Heart right ventricle (tissue), 16 donors: ENCODE measurements at regions of chr20 and their contacts with region 1.

Region 1: DNA sequence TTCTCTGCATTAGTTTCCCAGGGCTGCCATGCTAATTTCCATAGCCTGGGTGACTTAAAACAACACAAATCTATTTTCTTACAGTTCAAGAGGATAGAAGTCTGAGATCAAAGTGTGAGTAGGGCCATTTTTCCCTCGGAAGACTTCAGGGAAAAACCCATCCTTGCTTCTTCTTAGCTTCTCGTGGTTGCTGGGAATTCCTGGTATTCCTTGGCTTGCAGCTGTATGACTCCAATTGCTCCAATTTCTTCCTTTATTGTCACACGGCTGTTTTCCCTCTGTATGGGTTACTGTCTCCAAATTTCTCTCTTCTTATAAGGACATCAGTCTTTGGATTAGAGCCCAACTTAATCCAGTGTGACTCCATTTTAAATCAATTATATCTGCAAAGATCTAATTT is 128.4 kb upstream of the JAG1 start:
- DNase-seq: no peak
- ATAC-seq: no peak
- H3K4me3 ChIP-seq: no peak overlapping the region
- H3K27ac ChIP-seq: no peak overlapping the region
- H3K4me1 ChIP-seq: peaks cover 0 to 27% (median 18%) of the 10 kb centered on the region in 9 donors
- H3K27me3 ChIP-seq: no peaks in the 10 kb centered on the region
- CTCF ChIP-seq: no peak

Region 2: DNA sequence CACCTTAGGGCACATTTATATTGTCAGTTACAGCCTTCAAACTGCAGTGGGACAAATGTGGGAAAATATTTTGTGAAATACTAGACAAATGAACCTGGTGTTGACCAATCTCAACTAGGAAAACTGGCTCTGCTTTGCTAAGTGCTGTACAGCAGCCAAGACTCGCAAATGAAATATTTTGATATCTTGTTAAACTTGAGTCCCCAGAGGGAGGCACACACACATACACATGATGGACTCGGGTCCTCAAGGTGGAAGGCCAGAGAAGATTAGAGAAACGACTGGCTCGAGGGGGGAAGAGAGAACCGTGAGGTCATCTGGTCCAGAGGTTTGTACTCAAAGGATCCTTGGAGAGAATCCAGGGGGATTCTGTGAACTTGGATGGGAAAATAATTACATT is 61.2 kb before region 1 on chr20:
- intact Hi-C with region 1: loop called in 1 of 10 experiments (anchors 2 kb)
- DNase-seq: no peak
- ATAC-seq: peak in 4 of 8 donors; percentile 24 to 58 (median 33)
- H3K4me3 ChIP-seq: no peak overlapping the region
- H3K27ac ChIP-seq: peak overlapping the region in 5 of 10 donors; percentile 15 to 62 (median 38)
- H3K4me1 ChIP-seq: peaks cover 0 to 42% (median 13%) of the 10 kb centered on the region in 9 donors
- H3K27me3 ChIP-seq: no peaks in the 10 kb centered on the region
- CTCF ChIP-seq: no peak

Region 3: DNA sequence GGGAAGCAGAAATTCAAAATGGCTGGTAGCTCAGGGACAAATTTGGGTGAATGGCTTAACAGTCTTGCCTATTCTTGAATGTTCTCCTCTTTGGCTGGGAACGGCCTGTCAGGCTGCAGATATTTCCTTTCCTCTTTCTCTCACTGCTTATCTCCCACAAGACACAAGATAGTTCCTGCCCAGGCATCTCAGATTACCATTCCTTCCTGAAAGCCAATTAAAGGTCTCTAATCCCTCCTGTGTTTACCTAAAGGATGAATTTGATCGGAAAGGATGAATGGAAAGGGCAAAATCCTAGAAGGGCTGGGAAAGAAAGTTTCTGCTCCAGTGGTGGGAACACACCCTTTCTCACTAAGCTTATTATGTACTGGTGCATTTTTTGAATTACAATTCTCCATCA is 32.5 kb before region 1 on chr20:
- intact Hi-C with region 1: no loop called
- DNase-seq: no peak
- ATAC-seq: no peak
- H3K4me3 ChIP-seq: no peak overlapping the region
- H3K27ac ChIP-seq: no peak overlapping the region
- H3K4me1 ChIP-seq: no peaks in the 10 kb centered on the region
- H3K27me3 ChIP-seq: no peaks in the 10 kb centered on the region
- CTCF ChIP-seq: no peak

Region 4: GRCh38 chr20:10857352-10858070 is 55.3 kb after region 1 on chr20:
- intact Hi-C with region 1: loop called in 1 of 10 experiments (anchors 2 kb)
- DNase-seq: peak in 1 of 2 donors; percentile 59
- ATAC-seq: peak; percentile 56 to 89 (median 76)
- H3K4me3 ChIP-seq: no peak overlapping the region
- H3K27ac ChIP-seq: peak overlapping the region in 7 of 10 donors; percentile 36 to 72 (median 52)
- H3K4me1 ChIP-seq: peaks cover 0 to 51% (median 27%) of the 10 kb centered on the region in 9 donors
- H3K27me3 ChIP-seq: no peaks in the 10 kb centered on the region
- CTCF ChIP-seq: no peak